Panc1 (cell line): ENCODE measurements at regions of chr1 and their contacts with region 1.

Region 1: DNA sequence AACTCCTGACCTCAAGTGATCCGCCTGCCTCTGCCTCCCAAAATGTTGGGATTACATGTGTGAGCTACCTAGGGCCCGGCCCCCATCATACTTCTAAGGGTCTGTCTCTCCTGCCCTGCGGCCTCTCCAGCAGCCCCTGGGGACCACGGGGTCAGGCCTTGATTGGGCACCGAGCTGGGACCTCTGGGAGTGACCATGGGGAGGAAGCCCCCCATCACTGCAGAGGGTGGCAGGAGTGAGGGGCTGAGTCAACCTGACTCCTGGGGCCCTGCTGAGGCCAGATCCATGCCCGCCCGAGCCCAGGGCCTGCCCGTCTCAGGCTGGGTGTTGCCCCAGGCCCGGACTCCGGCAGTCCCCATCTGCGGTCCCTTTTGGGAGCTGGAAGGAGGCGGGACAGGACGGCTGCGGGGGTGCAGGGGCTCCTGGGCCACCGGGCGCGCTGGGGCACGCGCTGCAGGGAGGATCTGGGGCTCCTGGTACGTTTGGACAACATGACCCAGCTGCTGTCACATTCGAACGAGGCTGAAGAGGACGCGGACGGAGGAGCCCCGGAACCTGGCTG is 6.7 kb upstream of the CALML6 start:
- DNase-seq: no peak
- ATAC-seq: peak; percentile 24
- H3K4me3 ChIP-seq: peak overlapping the region; percentile 56 to 62
- H3K27ac ChIP-seq: peak overlapping the region; percentile 79
- H3K4me1 ChIP-seq: peaks cover 25% of the 10 kb centered on the region
- H3K27me3 ChIP-seq: no peaks in the 10 kb centered on the region
- CTCF ChIP-seq: no peak

Region 2: DNA sequence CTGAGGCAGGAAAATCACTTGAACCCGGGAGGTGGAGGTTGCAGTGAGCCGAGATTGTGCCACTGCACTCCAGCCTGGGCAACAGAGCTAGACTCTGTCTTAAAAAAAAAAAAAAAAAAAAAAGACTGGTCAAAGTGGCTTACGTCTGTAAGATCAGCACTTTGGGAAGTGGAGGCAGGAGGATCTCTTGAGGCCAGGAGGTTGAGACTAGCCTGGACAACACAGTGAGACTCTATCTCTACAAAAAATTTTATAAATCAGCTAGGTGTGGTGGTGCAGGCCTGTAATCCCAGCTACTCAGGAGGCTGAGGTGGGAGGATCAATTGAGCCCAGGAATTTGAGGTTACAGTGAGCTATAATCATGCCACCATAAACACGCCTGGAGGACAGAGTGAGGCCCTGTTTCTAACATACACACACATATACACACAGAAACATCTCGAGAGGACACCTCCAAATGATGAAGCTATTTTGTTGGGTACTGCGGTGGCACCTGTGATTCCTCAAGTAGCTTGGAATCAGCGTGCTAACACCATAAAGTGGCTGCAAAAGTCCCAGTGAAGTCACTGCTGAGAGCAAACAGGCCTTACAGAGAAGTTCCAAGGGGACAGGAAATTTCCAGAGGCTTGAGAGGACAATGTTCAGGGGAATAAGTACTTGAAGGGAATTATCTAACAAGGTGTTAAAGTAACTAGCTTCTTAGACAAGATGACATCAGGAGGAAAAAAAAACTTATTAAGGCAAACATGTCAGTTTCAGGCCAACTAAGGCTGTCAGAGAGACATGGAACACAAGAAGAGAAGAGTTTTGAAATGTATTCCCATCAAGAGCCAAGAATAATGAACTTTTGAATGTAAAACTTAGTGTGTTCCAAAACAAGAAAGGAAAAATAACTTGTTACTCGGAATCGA is 131.4 kb before region 1 on chr1:
- CTCF ChIA-PET with region 1: interaction called, 5 read pairs
- POLR2A ChIA-PET with region 1: interaction called, 10 read pairs
- in situ Hi-C with region 1: no loop called
- intact Hi-C with region 1: no loop called
- DNase-seq: no peak
- ATAC-seq: no peak
- H3K4me3 ChIP-seq: peak overlapping the region; percentile 62 to 73
- H3K27ac ChIP-seq: peak overlapping the region; percentile 90
- H3K4me1 ChIP-seq: peaks cover 28% of the 10 kb centered on the region
- H3K27me3 ChIP-seq: no peaks in the 10 kb centered on the region
- CTCF ChIP-seq: no peak

Region 3: GRCh38 chr1:1806890-1807289 is 101.4 kb before region 1 on chr1:
- CTCF ChIA-PET with region 1: no interaction called
- POLR2A ChIA-PET with region 1: no interaction called
- in situ Hi-C with region 1: no loop called
- intact Hi-C with region 1: no loop called
- DNase-seq: no peak
- ATAC-seq: no peak
- H3K4me3 ChIP-seq: no peak overlapping the region
- H3K27ac ChIP-seq: no peak overlapping the region
- H3K4me1 ChIP-seq: no peaks in the 10 kb centered on the region
- H3K27me3 ChIP-seq: no peaks in the 10 kb centered on the region
- CTCF ChIP-seq: no peak

Region 4: GRCh38 chr1:1833916-1834325 is 74.4 kb before region 1 on chr1:
- CTCF ChIA-PET with region 1: no interaction called
- POLR2A ChIA-PET with region 1: no interaction called
- in situ Hi-C with region 1: no loop called
- intact Hi-C with region 1: no loop called
- DNase-seq: no peak
- ATAC-seq: no peak
- H3K4me3 ChIP-seq: no peak overlapping the region
- H3K27ac ChIP-seq: no peak overlapping the region
- H3K4me1 ChIP-seq: no peaks in the 10 kb centered on the region; the same call in 1 of the 2 replicates
- H3K27me3 ChIP-seq: no peaks in the 10 kb centered on the region
- CTCF ChIP-seq: no peak

Region 5: GRCh38 chr1:2290595-2291510 is 382.5 kb after region 1 on chr1:
- CTCF ChIA-PET with region 1: no interaction called
- POLR2A ChIA-PET with region 1: no interaction called
- in situ Hi-C with region 1: no loop called
- intact Hi-C with region 1: no loop called
- DNase-seq: no peak
- ATAC-seq: no peak
- H3K4me3 ChIP-seq: no peak overlapping the region
- H3K27ac ChIP-seq: no peak overlapping the region
- H3K4me1 ChIP-seq: peaks cover 18% of the 10 kb centered on the region
- H3K27me3 ChIP-seq: no peaks in the 10 kb centered on the region
- CTCF ChIP-seq: no peak